ENCODE measurements at regions of chr4 and their contacts with region 1.

Region 1: GRCh38 chr4:112938461-112939058 is 110.9 kb upstream of the ANK2 start:
- DNase-seq: peak; percentile 14
- ATAC-seq: no peak
- H3K4me3 ChIP-seq: no peak overlapping the region
- H3K27ac ChIP-seq: no peak overlapping the region
- H3K4me1 ChIP-seq: no peaks in the 10 kb centered on the region
- H3K27me3 ChIP-seq: no peaks in the 10 kb centered on the region; a peak in 1 of 5 replicates
- CTCF ChIP-seq: peak; percentile 58
- EP300 ChIP-seq: no peak
- POLR2A ChIP-seq: no peak
- RAD21 ChIP-seq: 0 out of 2 replicates have a peak, but pooled peaks have one; percentile 26

Region 2: GRCh38 chr4:112327965-112328733 is 610.4 kb before region 1 on chr4:
- CTCF ChIA-PET with region 1: no interaction called
- POLR2A ChIA-PET with region 1: no interaction called
- in situ Hi-C with region 1: loop called (anchors 25 kb)
- intact Hi-C with region 1: no loop called
- DNase-seq: peak; percentile 38
- ATAC-seq: peak; percentile 37; the same call in 1 of the 3 replicates
- H3K4me3 ChIP-seq: no peak overlapping the region
- H3K27ac ChIP-seq: no peak overlapping the region
- H3K4me1 ChIP-seq: no peaks in the 10 kb centered on the region
- H3K27me3 ChIP-seq: no peaks in the 10 kb centered on the region
- CTCF ChIP-seq: peak; percentile 61
- EP300 ChIP-seq: no peak
- POLR2A ChIP-seq: no peak
- RAD21 ChIP-seq: peak; percentile 50; the same call in 1 of the 2 replicates

Region 3: GRCh38 chr4:112636688-112637551 is 301.6 kb before region 1 on chr4 and contains the starts of genes LARP7 and ZGRF1:
- CTCF ChIA-PET with region 1: no interaction called
- POLR2A ChIA-PET with region 1: no interaction called
- in situ Hi-C with region 1: loop called (anchors 10 kb)
- intact Hi-C with region 1: no loop called
- DNase-seq: peak; percentile 97
- ATAC-seq: peak; percentile 95
- H3K4me3 ChIP-seq: peak within 1 kb of the TSS; percentile 72 to 98 (median 83)
- H3K27ac ChIP-seq: peak within 1 kb of the TSS; percentile 85
- H3K4me1 ChIP-seq: peaks cover 16% of the 10 kb centered on the region
- H3K27me3 ChIP-seq: no peaks in the 10 kb centered on the region; a peak in 1 of 5 replicates
- CTCF ChIP-seq: peak; percentile 83
- EP300 ChIP-seq: peak; percentile 15 to 47; a peak in 1 of 4 replicates
- POLR2A ChIP-seq: peak; percentile 52 to 81; a peak in 3 of 4 replicates
- RAD21 ChIP-seq: no peak; the same call in 1 of the 2 replicates
- total RNA-seq, gene LARP7: 37.1 and 49.6 TPM in 2 replicates
- total RNA-seq, gene ZGRF1: 14.0 and 15.9 TPM in 2 replicates

Region 4: GRCh38 chr4:112765317-112765975 is 173.1 kb before region 1 on chr4:
- CTCF ChIA-PET with region 1: no interaction called
- POLR2A ChIA-PET with region 1: no interaction called
- in situ Hi-C with region 1: no loop called
- intact Hi-C with region 1: loop called (anchors 1 kb)
- DNase-seq: peak; percentile 52
- ATAC-seq: peak; percentile 95
- H3K4me3 ChIP-seq: no peak overlapping the region
- H3K27ac ChIP-seq: no peak overlapping the region
- H3K4me1 ChIP-seq: peaks cover 8% of the 10 kb centered on the region; the same call in 1 of the 2 replicates
- H3K27me3 ChIP-seq: no peaks in the 10 kb centered on the region
- CTCF ChIP-seq: peak; percentile 65
- EP300 ChIP-seq: no peak
- POLR2A ChIP-seq: no peak
- RAD21 ChIP-seq: no peak

Region 5: DNA sequence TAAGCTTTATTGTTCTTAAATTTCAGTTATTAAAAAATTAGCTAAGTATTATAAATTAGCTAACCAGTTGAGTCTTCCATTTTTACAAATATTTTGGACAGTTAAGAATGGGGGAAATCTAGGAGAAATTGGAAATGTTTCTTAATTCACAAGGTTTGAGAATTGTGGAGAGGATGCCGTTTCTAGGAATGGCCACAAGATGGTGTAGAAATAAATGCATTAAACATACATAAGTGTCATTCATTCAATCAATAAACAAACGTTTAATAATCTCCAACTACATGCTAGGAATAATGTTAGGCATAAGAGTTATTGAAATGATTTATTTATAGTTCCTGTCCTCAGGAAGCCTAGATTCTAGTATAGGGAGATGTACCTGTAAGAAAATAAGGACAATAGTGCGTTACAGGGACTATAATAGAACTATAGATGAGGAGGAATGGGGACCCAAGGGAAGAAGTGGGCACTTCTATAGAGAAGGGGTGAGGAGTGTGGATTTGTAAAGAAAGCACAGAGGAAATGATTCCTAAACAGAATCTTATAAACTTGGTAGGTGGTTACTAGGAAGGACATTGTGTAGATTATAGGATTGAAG is 84.8 kb before region 1 on chr4:
- CTCF ChIA-PET with region 1: interaction called, 9 read pairs
- POLR2A ChIA-PET with region 1: no interaction called
- in situ Hi-C with region 1: no loop called
- intact Hi-C with region 1: loop called (anchors 1 kb)
- DNase-seq: no peak
- ATAC-seq: no peak
- H3K4me3 ChIP-seq: no peak overlapping the region
- H3K27ac ChIP-seq: no peak overlapping the region
- H3K4me1 ChIP-seq: no peaks in the 10 kb centered on the region
- H3K27me3 ChIP-seq: no peaks in the 10 kb centered on the region; a peak in 2 of 5 replicates
- CTCF ChIP-seq: 0 out of 2 replicates have a peak, but pooled peaks have one; percentile 15
- EP300 ChIP-seq: no peak
- POLR2A ChIP-seq: no peak
- RAD21 ChIP-seq: no peak

Region 6: GRCh38 chr4:112951362-112952312 is 13.1 kb after region 1 on chr4:
- CTCF ChIA-PET with region 1: no interaction called
- POLR2A ChIA-PET with region 1: no interaction called
- in situ Hi-C with region 1: no loop called
- intact Hi-C with region 1: no loop called
- DNase-seq: peak; percentile 9
- ATAC-seq: no peak
- H3K4me3 ChIP-seq: no peak overlapping the region
- H3K27ac ChIP-seq: no peak overlapping the region
- H3K4me1 ChIP-seq: no peaks in the 10 kb centered on the region
- H3K27me3 ChIP-seq: no peaks in the 10 kb centered on the region
- CTCF ChIP-seq: peak; percentile 16; the same call in 1 of the 2 replicates
- EP300 ChIP-seq: no peak
- POLR2A ChIP-seq: no peak
- RAD21 ChIP-seq: no peak